CD4-positive, alpha-beta T cell (primary cell): ENCODE measurements at regions of chr19 and their contacts with region 1.

Region 1: DNA sequence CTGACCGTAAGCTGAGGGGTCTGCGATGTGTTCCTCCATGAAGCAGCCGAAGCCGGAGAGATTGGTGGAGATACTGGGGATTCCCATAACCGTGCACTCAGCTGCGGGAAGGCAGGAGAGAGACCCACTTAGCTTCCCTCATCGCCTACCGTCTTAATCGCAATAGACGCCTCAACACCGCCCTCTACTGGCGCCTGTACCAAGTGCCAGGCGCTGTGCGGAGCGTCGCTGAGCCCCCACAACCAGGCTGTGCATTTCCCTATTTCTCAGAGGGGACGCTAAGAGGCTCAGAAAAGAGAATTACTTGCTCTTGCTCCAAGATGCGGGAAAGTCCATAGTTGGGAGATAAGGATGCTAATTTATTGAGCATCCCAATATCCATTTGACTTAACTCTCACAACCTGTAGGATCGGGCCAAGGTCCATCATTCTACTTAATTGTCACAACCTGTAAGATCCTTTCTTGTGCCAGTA is 5.8 kb downstream of the FTL start:
- DNase-seq: peak; percentile 68 to 92 (median 79)
- ATAC-seq: peak; percentile 95
- H3K4me3 ChIP-seq: no peak overlapping the region
- H3K4me3 Mint-ChIP-seq: peak overlapping the region; percentile 21
- H3K27ac ChIP-seq: no peak overlapping the region
- H3K27ac Mint-ChIP-seq: peak overlapping the region; percentile 16
- H3K4me1 ChIP-seq: peaks cover 18% of the 10 kb centered on the region
- H3K4me1 Mint-ChIP-seq: peaks cover 12% of the 10 kb centered on the region
- H3K27me3 ChIP-seq: no peaks in the 10 kb centered on the region
- H3K27me3 Mint-ChIP-seq: no peaks in the 10 kb centered on the region
- CTCF ChIP-seq: peak; percentile 95

Region 2: GRCh38 chr19:48770260-48770659 is 200.7 kb before region 1 on chr19:
- CTCF ChIA-PET with region 1: no interaction called
- POLR2A ChIA-PET with region 1: no interaction called
- intact Hi-C with region 1: no loop called
- DNase-seq: no peak
- ATAC-seq: no peak
- H3K4me3 ChIP-seq: no peak overlapping the region
- H3K4me3 Mint-ChIP-seq: no peak overlapping the region
- H3K27ac ChIP-seq: no peak overlapping the region
- H3K27ac Mint-ChIP-seq: no peak overlapping the region
- H3K4me1 ChIP-seq: no peaks in the 10 kb centered on the region
- H3K4me1 Mint-ChIP-seq: no peaks in the 10 kb centered on the region
- H3K27me3 ChIP-seq: peaks cover 4 to 6% of the 10 kb centered on the region in 2 experiments
- H3K27me3 Mint-ChIP-seq: peaks cover 27% of the 10 kb centered on the region
- CTCF ChIP-seq: no peak

Region 3: GRCh38 chr19:48795055-48795684 is 175.8 kb before region 1 on chr19:
- CTCF ChIA-PET with region 1: interaction called, 19 read pairs
- POLR2A ChIA-PET with region 1: interaction called, 13 read pairs
- intact Hi-C with region 1: loop called (anchors 2 kb)
- DNase-seq: peak; percentile 72 to 93 (median 76)
- ATAC-seq: peak; percentile 97
- H3K4me3 ChIP-seq: peak overlapping the region; percentile 59
- H3K4me3 Mint-ChIP-seq: peak overlapping the region; percentile 96
- H3K27ac ChIP-seq: peak overlapping the region in 1 of 2 donors; percentile 23
- H3K27ac Mint-ChIP-seq: peak overlapping the region; percentile 90
- H3K4me1 ChIP-seq: peaks cover 14% of the 10 kb centered on the region
- H3K4me1 Mint-ChIP-seq: peaks cover 10% of the 10 kb centered on the region
- H3K27me3 ChIP-seq: no peaks in the 10 kb centered on the region
- H3K27me3 Mint-ChIP-seq: no peaks in the 10 kb centered on the region
- CTCF ChIP-seq: peak; percentile 99

Region 4: DNA sequence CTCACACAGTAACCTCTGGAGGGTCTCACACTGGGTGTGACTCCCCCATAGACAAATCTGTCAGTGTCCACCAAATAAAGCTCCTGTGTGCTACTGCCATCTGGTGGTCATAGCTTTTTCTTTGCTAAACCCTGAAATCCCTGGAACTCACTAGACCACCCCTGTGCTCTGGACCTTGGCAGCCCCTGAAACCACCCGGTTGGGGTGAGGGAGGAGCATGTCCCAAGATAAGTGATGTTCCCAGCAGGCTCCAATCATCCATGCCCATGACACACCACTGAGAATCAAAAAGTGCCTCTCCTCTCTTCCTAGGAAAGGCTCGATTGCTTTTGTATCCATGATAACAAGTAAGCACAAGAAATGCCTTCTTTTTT is 128.2 kb before region 1 on chr19:
- CTCF ChIA-PET with region 1: interaction called, 31 read pairs
- POLR2A ChIA-PET with region 1: interaction called, 4 read pairs
- intact Hi-C with region 1: loop called (anchors 2 kb)
- DNase-seq: peak; percentile 9 to 79 (median 36)
- ATAC-seq: peak; percentile 68
- H3K4me3 ChIP-seq: no peak overlapping the region
- H3K4me3 Mint-ChIP-seq: no peak overlapping the region
- H3K27ac ChIP-seq: no peak overlapping the region
- H3K27ac Mint-ChIP-seq: no peak overlapping the region
- H3K4me1 ChIP-seq: no peaks in the 10 kb centered on the region
- H3K4me1 Mint-ChIP-seq: no peaks in the 10 kb centered on the region
- H3K27me3 ChIP-seq: no peaks in the 10 kb centered on the region
- H3K27me3 Mint-ChIP-seq: no peaks in the 10 kb centered on the region
- CTCF ChIP-seq: peak; percentile 77

Region 5: GRCh38 chr19:48872182-48872883 is 98.6 kb before region 1 on chr19 and contains the start of gene PPP1R15A:
- CTCF ChIA-PET with region 1: interaction called, 4 read pairs
- POLR2A ChIA-PET with region 1: interaction called, 29 read pairs
- intact Hi-C with region 1: loop called in 1 of 2 experiments (anchors 5 kb)
- DNase-seq: peak; percentile 94 to 100 (median 99)
- ATAC-seq: peak; percentile 33
- H3K4me3 ChIP-seq: peak within 1 kb of the TSS; percentile 100
- H3K4me3 Mint-ChIP-seq: peak within 1 kb of the TSS; percentile 96
- H3K27ac ChIP-seq: peak within 1 kb of the TSS; percentile 100
- H3K27ac Mint-ChIP-seq: peak within 1 kb of the TSS; percentile 98
- H3K4me1 ChIP-seq: peaks cover 45% of the 10 kb centered on the region
- H3K4me1 Mint-ChIP-seq: peaks cover 45% of the 10 kb centered on the region
- H3K27me3 ChIP-seq: peaks cover 0 to under 1% of the 10 kb centered on the region in 2 experiments
- H3K27me3 Mint-ChIP-seq: no peaks in the 10 kb centered on the region
- CTCF ChIP-seq: no peak
- total RNA-seq, gene PPP1R15A: 569 to 584 TPM

Region 6: GRCh38 chr19:48899781-48900476 is 71.0 kb before region 1 on chr19 and contains the start of gene NUCB1:
- CTCF ChIA-PET with region 1: interaction called, 11 read pairs
- POLR2A ChIA-PET with region 1: interaction called, 26 read pairs
- intact Hi-C with region 1: no loop called
- DNase-seq: peak; percentile 96 to 99 (median 99)
- ATAC-seq: peak; percentile 93
- H3K4me3 ChIP-seq: peak within 1 kb of the TSS; percentile 92
- H3K4me3 Mint-ChIP-seq: peak within 1 kb of the TSS; percentile 95
- H3K27ac ChIP-seq: peak within 1 kb of the TSS; percentile 65 to 72
- H3K27ac Mint-ChIP-seq: peak within 1 kb of the TSS; percentile 88
- H3K4me1 ChIP-seq: peaks cover 51% of the 10 kb centered on the region
- H3K4me1 Mint-ChIP-seq: peaks cover 37% of the 10 kb centered on the region
- H3K27me3 ChIP-seq: peaks cover 3 to 10% of the 10 kb centered on the region in 2 experiments
- H3K27me3 Mint-ChIP-seq: peaks cover 6% of the 10 kb centered on the region
- CTCF ChIP-seq: no peak
- total RNA-seq, gene NUCB1: 73.7 to 77.0 TPM

Region 7: DNA sequence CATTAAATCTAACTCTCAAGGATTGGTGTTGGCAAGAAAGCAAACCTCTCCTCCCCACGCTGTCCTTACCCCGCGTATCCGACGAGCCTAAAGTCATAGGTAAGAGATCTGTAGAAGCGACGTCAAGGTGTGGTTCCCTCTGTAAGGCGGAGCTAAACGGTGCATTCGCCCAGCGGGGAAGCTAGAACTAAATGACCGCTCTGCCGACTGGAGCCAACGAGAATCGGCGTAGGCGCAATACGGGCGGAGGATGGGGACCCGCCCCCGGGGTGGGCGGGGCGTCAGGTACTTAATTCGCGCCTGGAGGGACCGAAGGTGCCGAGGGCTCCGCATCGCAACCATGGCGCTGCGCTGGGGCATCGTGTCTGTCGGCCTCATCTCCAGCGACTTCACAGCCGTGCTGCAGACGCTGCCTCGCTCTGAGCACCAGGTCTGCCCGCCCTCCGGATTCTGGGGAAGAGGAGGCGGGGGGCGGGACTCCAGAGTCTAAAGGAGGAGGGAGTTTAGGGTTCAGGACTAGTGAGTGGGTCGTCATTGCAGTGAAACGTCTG is 37.5 kb before region 1 on chr19 and contains the start of gene DHDH:
- CTCF ChIA-PET with region 1: interaction called, 8 read pairs
- POLR2A ChIA-PET with region 1: interaction called, 12 read pairs
- intact Hi-C with region 1: loop called in 1 of 2 experiments (anchors 5 kb)
- DNase-seq: peak; percentile 77 to 96 (median 86)
- ATAC-seq: peak; percentile 96
- H3K4me3 ChIP-seq: peak within 1 kb of the TSS; percentile 63
- H3K4me3 Mint-ChIP-seq: peak within 1 kb of the TSS; percentile 82
- H3K27ac ChIP-seq: peak within 1 kb of the TSS in 1 of 2 donors; percentile 25
- H3K27ac Mint-ChIP-seq: peak within 1 kb of the TSS; percentile 77
- H3K4me1 ChIP-seq: peaks cover 14% of the 10 kb centered on the region
- H3K4me1 Mint-ChIP-seq: peaks cover 20% of the 10 kb centered on the region
- H3K27me3 ChIP-seq: no peaks in the 10 kb centered on the region
- H3K27me3 Mint-ChIP-seq: no peaks in the 10 kb centered on the region
- CTCF ChIP-seq: no peak
- total RNA-seq, gene DHDH: 1.1 to 1.8 TPM